Activated T-helper 1 cell treated with anti-CD3 and anti-CD28 coated beads, Interleukin-12 subunit alpha, Interleukin-12 subunit beta, Interleukin-2, Interleukin-4 antibody, amounts not matched to agents 30 ng/mL and 10 ng/mL and 1 ng/mL, durations not matched to agents 14 hours and 24 hours and 36 hours (primary cell): ENCODE measurements at regions of chr17 and their contacts with region 1.

Region 1: GRCh38 chr17:42388381-42389134 is at the start of gene STAT3:
- DNase-seq: peak; percentile 100
- H3K4me3 Mint-ChIP-seq: peak within 1 kb of the TSS; percentile 92
- H3K27ac Mint-ChIP-seq: peak within 1 kb of the TSS; percentile 100
- H3K4me1 Mint-ChIP-seq: peaks cover 54% of the 10 kb centered on the region
- H3K27me3 Mint-ChIP-seq: no peaks in the 10 kb centered on the region
- total RNA-seq, gene STAT3: 240 and 241 TPM in 2 replicates

Region 2: DNA sequence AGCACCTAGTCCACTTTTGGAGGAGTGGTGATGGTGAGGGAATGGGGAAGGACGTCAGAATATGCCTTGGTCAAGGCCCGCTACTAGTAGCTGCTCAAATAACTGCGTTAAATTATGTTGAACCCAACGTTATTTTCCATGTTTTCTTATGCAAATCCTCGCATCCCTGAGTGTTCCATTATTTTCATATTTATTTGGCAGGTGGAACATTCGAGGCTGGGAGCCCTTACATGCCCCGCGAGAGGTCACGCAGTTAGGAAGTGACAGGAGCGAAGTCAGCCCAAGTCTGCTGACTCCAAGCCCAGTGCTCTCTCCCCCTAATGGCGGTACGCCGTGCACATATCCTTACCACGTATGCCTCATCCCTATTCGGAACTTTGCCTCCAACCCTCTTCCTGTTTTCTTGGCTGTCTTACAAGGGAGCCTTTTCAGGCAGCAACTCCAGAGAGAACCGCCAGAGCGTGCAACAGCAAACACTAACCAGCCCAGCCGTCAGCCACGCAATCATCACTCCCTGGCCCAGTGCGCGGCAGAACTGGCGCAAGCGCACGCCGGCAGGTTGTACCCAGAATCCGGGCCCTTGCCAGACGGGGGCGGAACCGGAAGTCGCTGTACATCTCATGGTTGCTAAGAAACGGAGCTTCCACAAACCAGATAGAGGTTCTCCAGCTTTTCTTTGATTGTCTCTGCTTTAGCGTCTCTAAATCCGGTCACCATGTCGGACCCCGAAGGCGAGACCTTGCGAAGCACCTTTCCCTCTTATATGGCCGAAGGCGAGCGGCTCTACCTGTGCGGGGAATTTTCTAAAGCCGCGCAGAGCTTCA is 458.3 kb before region 1 on chr17 and contains the start of gene ODAD4:
- intact Hi-C with region 1: loop called (anchors 5 kb)
- DNase-seq: peak; percentile 95
- H3K4me3 Mint-ChIP-seq: peak within 1 kb of the TSS; percentile 97
- H3K27ac Mint-ChIP-seq: peak within 1 kb of the TSS; percentile 96
- H3K4me1 Mint-ChIP-seq: peaks cover 35% of the 10 kb centered on the region
- H3K27me3 Mint-ChIP-seq: no peaks in the 10 kb centered on the region
- total RNA-seq, gene ODAD4: 0.39 and 0.73 TPM in 2 replicates

Region 3: DNA sequence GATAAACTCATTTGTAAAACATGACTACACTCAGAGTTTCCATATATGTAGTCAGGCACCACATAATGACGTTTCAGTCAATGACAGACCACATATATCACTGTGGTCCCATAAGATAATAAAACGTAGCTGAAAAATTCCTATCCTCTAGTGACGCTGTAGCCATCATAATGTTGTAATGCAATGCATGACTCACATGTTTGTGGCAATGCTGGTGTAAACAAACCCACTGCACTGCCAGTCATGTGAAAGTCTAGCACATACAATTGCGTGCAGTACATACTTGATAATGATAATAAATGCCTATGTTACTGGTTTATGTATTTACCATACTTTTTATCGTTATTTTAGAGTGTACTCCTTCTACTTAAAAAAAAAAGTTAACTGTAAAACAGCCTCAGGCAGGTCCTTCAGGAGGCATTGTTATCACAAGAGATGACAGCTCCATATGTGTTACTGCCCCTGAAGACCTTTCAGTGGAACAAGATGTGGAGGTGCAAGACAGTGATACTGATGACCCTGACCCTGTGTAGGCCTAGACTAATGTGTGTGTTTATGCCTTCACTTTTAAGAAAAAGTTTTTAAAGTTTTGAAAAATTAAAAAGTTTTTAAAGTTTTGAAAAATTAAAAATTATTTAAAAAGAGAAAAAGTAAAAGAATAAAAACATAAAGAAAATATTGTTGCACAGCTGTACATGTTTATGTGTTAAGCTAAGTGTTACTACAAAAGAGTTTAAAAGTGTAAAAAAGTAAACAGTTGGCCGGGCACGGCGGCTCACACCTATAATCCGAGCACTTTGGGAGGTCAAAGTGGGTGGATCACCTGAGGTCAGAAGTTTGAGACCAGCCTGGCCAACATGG is 121.4 kb before region 1 on chr17:
- intact Hi-C with region 1: loop called (anchors 1 kb)
- DNase-seq: peak; percentile 52
- H3K4me3 Mint-ChIP-seq: peak overlapping the region; percentile 73
- H3K27ac Mint-ChIP-seq: peak overlapping the region; percentile 98
- H3K4me1 Mint-ChIP-seq: peaks cover 67% of the 10 kb centered on the region
- H3K27me3 Mint-ChIP-seq: no peaks in the 10 kb centered on the region

Region 4: GRCh38 chr17:42337442-42337841 is 51.1 kb before region 1 on chr17:
- intact Hi-C with region 1: loop called (anchors 1 kb)
- DNase-seq: peak; percentile 82
- H3K4me3 Mint-ChIP-seq: peak overlapping the region; percentile 79
- H3K27ac Mint-ChIP-seq: peak overlapping the region; percentile 97
- H3K4me1 Mint-ChIP-seq: peaks cover 76% of the 10 kb centered on the region
- H3K27me3 Mint-ChIP-seq: no peaks in the 10 kb centered on the region

Region 5: GRCh38 chr17:42405963-42406495 is 17.5 kb after region 1 on chr17:
- intact Hi-C with region 1: loop called (anchors 2 kb)
- DNase-seq: peak; percentile 73
- H3K4me3 Mint-ChIP-seq: no peak overlapping the region
- H3K27ac Mint-ChIP-seq: no peak overlapping the region
- H3K4me1 Mint-ChIP-seq: peaks cover 28% of the 10 kb centered on the region
- H3K27me3 Mint-ChIP-seq: peaks cover 8% of the 10 kb centered on the region

Region 6: DNA sequence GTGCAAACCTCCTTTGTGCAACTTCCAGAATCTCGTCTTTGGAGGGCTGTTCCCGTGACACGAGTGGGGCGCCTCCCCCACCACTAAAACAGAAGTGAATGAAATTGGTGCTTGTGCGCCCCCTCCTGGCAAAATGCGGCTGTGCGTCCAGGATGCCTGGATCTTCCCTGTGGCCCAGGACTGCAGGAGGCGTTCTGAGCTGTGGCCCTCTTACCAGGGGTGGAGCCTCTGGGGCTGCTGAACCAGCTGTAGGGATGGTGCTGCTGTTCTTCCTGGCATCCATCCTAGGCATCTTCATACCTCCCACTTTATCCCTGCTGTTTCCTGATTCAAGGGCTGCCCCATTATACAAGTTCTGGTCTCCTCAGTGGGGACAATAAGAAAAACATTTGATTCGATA is 129.0 kb after region 1 on chr17:
- intact Hi-C with region 1: no loop called
- DNase-seq: peak; percentile 70
- H3K4me3 Mint-ChIP-seq: no peak overlapping the region
- H3K27ac Mint-ChIP-seq: no peak overlapping the region
- H3K4me1 Mint-ChIP-seq: no peaks in the 10 kb centered on the region
- H3K27me3 Mint-ChIP-seq: peaks cover 4% of the 10 kb centered on the region